ENCODE measurements at regions of chr2 and their contacts with region 1.

Region 1: DNA sequence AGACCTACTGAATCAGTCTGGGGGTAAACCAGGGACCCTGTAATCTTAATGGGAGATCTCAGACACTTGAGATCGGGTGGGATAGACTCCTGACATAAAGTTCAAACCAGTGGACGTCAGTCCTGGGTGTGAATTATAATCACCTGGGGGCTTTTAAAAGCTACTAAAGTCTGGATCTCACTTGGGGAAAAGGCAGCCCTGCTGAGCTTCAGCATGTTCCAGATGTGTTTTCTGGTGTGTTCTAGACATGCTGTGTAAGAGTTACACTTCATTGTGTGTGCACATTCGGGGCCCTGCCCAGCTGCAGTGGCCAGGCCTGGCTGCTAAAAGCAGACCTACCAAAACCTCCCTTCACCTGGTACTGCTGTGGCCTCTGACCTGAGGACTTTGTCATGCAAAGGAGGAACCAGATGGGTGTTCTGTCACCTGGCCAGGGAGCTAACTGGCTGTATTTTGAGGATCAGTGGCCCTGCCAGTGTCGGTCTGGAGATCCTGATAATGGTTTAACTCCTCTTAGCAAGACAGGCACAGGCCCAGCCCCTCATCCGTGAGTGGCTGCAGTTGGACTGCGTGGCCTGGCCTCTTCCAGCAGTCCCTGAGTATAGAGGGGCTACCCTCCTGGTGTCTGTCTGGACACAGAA is 10.6 kb downstream of the RRM2 start:
- DNase-seq: no peak
- ATAC-seq: no peak
- H3K4me3 ChIP-seq: no peak overlapping the region
- H3K27ac ChIP-seq: no peak overlapping the region
- H3K4me1 ChIP-seq: no peaks in the 10 kb centered on the region
- H3K27me3 ChIP-seq: no peaks in the 10 kb centered on the region

Region 2: DNA sequence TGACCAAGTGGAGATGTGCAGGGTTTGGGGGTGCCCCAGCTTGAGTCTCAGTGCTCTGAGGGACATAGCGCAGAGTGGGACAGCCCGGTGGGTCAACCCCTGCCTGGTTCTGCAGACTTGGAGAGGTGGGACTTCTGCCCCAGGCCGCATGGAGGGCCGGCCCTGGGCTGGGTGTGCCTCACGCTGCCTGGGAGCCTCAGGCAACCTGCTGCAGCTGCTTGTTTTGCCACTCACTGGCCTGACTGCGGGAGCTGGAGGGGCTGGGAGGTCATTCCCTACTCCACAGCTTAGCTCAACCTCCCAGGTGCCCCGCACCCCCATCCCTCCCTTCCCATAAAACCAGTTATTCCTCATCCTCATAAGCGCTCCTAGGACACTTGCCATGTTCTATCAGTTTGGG is 281.9 kb after region 1 on chr2:
- intact Hi-C with region 1: loop called in 1 of 4 experiments (anchors 5 kb)
- DNase-seq: no peak
- ATAC-seq: no peak
- H3K4me3 ChIP-seq: no peak overlapping the region
- H3K27ac ChIP-seq: no peak overlapping the region
- H3K4me1 ChIP-seq: peaks cover 2% of the 10 kb centered on the region
- H3K27me3 ChIP-seq: no peaks in the 10 kb centered on the region

Measured in right cardiac atrium (tissue), 5 donors.